AG04450 (cell line): ENCODE measurements at regions of chr15 and their contacts with region 1.

Region 1: DNA sequence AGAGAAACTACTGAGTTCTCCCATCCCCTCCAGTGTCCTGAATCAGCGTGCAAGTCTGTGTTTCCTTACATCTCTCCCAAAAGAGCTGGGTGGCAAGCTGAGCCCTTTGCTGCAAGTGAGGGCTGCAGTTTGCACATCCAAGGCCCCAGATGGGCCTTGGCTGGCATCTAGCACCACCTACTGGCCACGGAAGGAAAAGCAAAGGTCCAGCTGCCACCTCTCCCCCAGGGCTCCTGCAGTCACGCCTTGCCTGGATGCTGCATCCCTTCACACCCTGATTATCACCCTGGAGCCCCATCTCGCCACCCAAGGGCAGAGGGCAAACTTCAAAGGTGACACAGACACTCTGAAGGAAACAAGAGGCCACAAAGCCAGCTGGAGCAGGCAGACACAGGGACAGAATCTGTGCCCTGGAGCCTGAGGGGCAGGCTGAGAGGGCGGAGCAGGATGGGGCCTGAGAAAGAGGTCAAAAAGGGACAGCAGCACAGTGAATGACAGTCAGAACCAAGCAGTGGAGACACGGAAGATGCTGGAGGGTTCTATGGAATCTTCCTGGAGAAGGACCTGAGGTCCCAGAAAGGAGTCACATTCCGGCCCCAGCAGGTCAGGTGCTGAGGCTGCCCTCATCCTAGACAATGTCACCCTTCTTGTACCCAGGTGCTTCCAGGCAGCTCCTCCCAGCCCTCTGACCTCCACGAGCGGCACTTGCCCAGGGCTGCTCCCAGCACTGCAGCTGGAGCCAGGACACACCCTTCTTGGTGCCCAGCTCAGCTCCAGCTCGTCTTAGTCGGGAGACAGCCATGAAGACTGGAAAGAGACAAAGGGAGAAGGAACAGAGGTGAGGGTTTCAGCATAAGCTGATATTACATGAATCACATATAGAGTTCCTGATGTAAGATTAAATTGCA is 18.3 kb upstream of the NTRK3 start:
- DNase-seq: peak; percentile 21
- H3K4me3 ChIP-seq: no peak overlapping the region
- H3K27ac ChIP-seq: no peak overlapping the region
- H3K27me3 ChIP-seq: no peaks in the 10 kb centered on the region
- CTCF ChIP-seq: peak; percentile 90

Region 2: DNA sequence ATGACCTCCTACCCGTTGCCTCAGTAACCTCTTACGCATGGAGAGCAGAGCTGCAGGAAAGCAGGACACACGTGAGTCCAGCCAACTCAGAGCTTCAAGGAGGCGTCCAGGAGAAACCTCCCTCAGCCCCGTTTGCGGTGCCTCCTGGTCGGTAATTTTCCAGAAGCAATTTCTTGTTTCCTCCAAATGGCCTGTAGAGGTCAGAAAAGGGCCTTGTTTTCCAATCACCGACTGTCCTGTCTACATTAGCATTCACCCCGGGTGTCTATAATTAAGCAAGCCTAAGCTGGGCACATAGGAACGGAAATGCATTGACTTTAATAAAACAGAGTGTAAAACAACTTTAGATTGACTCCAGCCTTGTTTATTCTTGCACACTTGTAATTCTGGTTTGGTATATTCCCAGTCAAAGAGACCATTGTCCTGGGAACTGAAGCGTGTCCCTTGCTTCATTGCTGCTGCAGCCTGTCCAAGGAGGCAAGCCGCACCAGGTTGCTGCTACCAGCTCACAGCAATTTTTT is 1358.9 kb before region 1 on chr15:
- CTCF ChIA-PET with region 1: interaction called, 11 read pairs
- POLR2A ChIA-PET with region 1: no interaction called
- DNase-seq: peak; percentile 7
- H3K4me3 ChIP-seq: no peak overlapping the region
- H3K27ac ChIP-seq: no peak overlapping the region
- H3K27me3 ChIP-seq: no peaks in the 10 kb centered on the region
- CTCF ChIP-seq: peak; percentile 55

Region 3: DNA sequence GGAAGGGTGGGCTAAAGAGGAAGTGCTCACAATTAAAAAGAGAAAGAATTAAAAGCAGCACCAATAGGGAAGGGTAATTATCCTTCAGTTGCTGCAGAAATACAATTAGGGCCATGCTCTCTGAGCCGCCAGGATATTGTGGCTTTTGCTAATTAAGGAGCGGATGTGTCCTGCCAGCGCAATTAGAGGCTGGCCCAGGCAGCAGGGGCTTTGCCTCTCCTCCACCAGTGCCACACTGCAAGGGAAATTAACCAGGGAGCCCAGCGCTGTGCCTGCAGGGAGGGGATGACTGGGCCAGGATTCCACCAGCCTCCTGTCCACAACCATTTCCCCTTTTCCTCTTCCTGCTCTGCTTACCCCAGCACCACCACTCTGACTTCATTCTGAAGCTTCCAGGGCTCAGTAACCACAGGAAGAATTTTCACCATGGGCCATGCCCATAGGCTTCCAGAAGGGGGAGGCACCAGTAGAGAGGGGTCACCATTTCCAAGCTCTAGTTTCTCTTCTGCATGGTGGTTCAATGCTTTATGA is 336.0 kb after region 1 on chr15:
- CTCF ChIA-PET with region 1: no interaction called
- POLR2A ChIA-PET with region 1: no interaction called
- DNase-seq: no peak
- H3K4me3 ChIP-seq: no peak overlapping the region
- H3K27ac ChIP-seq: no peak overlapping the region
- H3K27me3 ChIP-seq: peaks cover 31% of the 10 kb centered on the region
- CTCF ChIP-seq: peak; percentile 30; the same call in 1 of the 2 replicates